Mucosa of descending colon (tissue), 3 donors: ENCODE measurements at regions of chr6 and their contacts with region 1.

Region 1: GRCh38 chr6:146700078-146700686 is 101.4 kb downstream of the ADGB start:
- DNase-seq: peak in 1 of 3 donors; percentile 91
- ATAC-seq: peak; percentile 94
- H3K4me3 ChIP-seq: no peak overlapping the region
- H3K4me1 ChIP-seq: no peaks in the 10 kb centered on the region
- CTCF ChIP-seq: no peak

Region 2: DNA sequence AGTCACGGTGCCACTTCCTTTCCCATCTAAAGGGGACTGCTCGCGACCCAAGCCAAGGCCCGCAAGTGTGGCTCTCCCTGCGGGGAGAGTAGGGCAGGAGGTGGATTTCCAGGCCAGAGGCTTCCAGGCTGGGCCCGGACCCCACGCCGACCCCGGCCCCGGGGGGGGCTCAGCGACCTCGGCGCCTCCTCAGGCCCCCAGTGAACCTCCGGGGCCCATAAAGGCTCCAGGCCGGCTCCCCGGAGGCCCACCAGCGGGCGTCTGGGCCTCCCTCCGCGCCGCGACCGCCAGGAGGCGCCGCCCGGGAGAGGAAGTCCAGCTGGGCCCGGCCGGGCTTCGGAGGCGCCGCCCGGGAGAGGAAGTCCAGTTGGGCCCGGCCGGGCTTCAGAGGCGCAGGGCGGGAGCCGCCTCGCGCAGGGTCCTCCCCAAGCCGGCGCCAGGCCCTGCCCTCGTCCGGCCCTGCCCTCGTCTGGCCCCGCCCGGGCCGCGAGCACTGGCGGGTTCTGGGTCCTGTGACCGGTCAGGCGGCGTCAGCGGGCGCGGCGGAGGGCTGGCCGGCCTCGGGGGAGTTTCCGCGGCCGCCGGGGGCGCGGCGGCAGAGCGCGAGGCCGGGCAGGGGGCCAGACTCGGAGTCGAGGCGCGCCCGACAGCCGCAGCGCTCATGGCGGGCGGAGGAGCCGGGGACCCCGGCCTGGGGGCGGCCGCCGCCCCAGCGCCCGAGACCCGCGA is 156.8 kb before region 1 on chr6 and contains the start of gene RAB32:
- intact Hi-C with region 1: loop called in 1 of 2 experiments (anchors 2 kb)
- DNase-seq: peak; percentile 90 to 96 (median 95)
- ATAC-seq: peak; percentile 96
- H3K4me3 ChIP-seq: peak within 1 kb of the TSS; percentile 62
- H3K4me1 ChIP-seq: peaks cover 18% of the 10 kb centered on the region
- CTCF ChIP-seq: peak; percentile 65
- total RNA-seq, gene RAB32: 28.7 to 39.9 (median 30.6) TPM

Region 3: DNA sequence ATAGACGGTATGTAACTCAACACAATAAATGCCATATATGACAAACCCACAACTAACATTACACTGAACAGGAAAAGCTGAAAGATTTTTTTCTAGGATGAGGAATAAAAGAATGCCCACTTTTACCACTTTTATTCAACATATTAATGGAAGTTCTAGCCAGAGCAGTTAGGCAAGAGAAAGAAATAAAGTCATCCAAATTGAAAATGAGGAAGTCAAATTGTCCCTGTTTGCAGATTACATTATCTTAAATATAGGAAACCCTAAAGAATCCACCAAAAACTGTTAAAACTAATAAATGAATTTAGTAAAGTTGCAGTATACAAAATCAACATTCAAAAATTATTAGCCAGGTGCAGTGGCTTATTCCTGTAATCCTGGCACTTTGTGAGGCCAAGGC is 126.0 kb before region 1 on chr6:
- intact Hi-C with region 1: no loop called
- DNase-seq: no peak
- ATAC-seq: no peak
- H3K4me3 ChIP-seq: no peak overlapping the region
- H3K4me1 ChIP-seq: no peaks in the 10 kb centered on the region
- CTCF ChIP-seq: no peak